GM10248 (cell line): ENCODE measurements at regions of chr3 and their contacts with region 1.

Region 1: GRCh38 chr3:72753495-72753894 is 94.8 kb downstream of the SHQ1 start:
- DNase-seq: no peak
- CTCF ChIP-seq: no peak

Region 2: DNA sequence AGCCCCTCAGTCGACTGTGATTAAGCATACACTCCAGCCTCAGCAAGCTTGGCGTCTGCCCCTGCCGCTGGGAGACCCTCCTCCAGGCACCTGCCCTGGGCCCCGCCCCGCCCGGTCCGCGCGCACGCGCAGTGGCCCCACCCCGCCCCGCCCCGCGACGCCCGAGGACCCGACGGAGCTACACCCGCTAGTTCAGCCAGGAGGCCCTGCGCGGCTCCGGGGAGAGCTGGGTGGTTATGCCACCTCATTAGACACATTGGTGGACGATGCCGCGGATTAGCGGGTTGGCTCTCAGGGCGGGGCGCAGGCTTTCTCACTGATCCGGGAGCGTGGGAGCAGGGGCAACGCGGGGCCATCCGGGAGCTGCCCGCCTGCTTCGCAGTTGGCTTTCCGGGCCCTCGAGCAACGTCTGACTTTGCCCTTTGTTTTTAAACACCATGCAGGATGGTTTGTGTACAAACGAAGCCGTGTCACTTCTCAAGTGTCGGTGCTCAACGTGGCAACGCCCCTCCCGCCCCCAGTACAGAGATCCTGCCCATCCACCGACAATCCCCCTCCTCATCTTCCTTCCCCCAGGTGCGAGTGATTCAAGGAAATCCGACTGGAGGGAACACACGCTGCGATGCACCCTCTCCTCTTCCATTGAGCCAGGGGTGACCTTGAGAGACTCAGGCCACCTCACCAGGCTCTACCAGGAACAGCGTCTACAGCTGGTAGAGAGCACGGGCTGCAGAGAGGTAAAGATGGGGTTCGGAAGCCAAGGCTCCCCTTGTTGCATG is 14.6 kb before region 1 on chr3:
- CTCF ChIA-PET with region 1: interaction called, 14 read pairs
- POLR2A ChIA-PET with region 1: interaction called, 4 read pairs
- DNase-seq: peak; percentile 90
- CTCF ChIP-seq: no peak